ENCODE measurements at regions of chr2 and their contacts with region 1.

Region 1: GRCh38 chr2:7672027-7672684 is 754.9 kb downstream of the RNF144A start:
- DNase-seq: peak; percentile 13 to 63 (median 53)
- H3K4me3 ChIP-seq: peak overlapping the region; percentile 13
- H3K4me3 Mint-ChIP-seq: peak overlapping the region; percentile 1 to 79 (median 70)
- H3K27ac ChIP-seq: no peak overlapping the region
- H3K27ac Mint-ChIP-seq: peak overlapping the region; percentile 43 to 93 (median 89)
- H3K4me1 ChIP-seq: peaks cover 21% of the 10 kb centered on the region
- H3K4me1 Mint-ChIP-seq: peaks cover 26 to 39% (median 32%) of the 10 kb centered on the region in 3 donors
- H3K27me3 ChIP-seq: no peaks in the 10 kb centered on the region
- H3K27me3 Mint-ChIP-seq: no peaks in the 10 kb centered on the region

Region 2: DNA sequence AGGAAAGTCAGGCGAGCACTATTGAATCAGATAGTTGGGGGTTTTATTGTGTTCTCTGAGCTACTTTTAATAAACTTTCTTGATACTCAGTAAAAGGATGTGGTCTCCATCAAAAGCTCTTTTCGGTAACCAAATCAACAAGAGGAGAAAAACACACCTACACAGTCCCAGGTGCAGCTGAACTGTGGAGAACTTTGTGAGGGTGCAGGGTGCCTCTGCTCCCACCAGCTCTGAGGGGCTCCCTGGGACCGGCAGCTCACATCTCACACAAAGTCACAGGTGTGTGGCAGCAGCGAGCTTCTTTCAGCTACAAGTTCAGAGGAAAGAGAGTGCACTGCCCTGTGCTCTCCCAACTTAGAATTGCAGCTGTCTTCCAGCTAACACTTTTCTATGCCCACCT is 104.5 kb before region 1 on chr2:
- CTCF ChIA-PET with region 1: interaction called, 16 read pairs
- POLR2A ChIA-PET with region 1: interaction called, 3 read pairs
- DNase-seq: peak in 4 of 5 donors; percentile 2 to 83 (median 71)
- H3K4me3 ChIP-seq: peak overlapping the region; percentile 11
- H3K4me3 Mint-ChIP-seq: peak overlapping the region in 6 of 7 donors; percentile 24 to 79 (median 64)
- H3K27ac ChIP-seq: no peak overlapping the region
- H3K27ac Mint-ChIP-seq: peak overlapping the region; percentile 55 to 96 (median 86)
- H3K4me1 ChIP-seq: peaks cover 48% of the 10 kb centered on the region
- H3K4me1 Mint-ChIP-seq: peaks cover 36 to 65% (median 53%) of the 10 kb centered on the region in 3 donors
- H3K27me3 ChIP-seq: no peaks in the 10 kb centered on the region
- H3K27me3 Mint-ChIP-seq: peaks cover 0 to 1% of the 10 kb centered on the region in 2 donors

Region 3: DNA sequence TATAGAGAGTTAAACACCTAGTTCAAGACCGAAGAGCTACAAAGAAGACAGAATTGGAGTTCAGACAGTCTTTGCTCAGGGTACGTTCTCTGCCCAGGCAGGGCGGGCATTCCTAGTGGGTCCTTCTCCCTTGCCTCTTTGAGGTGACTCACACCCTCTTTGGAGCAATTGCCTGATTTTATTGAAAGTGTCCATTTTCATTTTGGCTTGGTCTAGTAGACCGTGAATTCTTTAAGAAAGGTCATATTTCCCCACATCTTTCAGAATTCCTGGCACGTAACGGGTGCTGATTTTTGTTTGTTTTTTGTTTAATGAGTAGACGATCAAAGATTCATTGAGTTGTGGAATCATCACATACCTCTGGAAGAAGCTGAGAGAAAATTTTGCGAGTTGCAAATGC is 116.6 kb after region 1 on chr2:
- CTCF ChIA-PET with region 1: no interaction called
- POLR2A ChIA-PET with region 1: no interaction called
- DNase-seq: no peak
- H3K4me3 ChIP-seq: no peak overlapping the region
- H3K4me3 Mint-ChIP-seq: no peak overlapping the region
- H3K27ac ChIP-seq: no peak overlapping the region
- H3K27ac Mint-ChIP-seq: no peak overlapping the region
- H3K4me1 ChIP-seq: no peaks in the 10 kb centered on the region
- H3K4me1 Mint-ChIP-seq: no peaks in the 10 kb centered on the region
- H3K27me3 ChIP-seq: no peaks in the 10 kb centered on the region
- H3K27me3 Mint-ChIP-seq: peaks cover 0 to 5% of the 10 kb centered on the region in 2 donors